Naive thymus-derived CD4-positive, alpha-beta T cell (primary cell): ENCODE measurements at regions of chr15 and their contacts with region 1.

Region 1: GRCh38 chr15:72155635-72156616 is 37.7 kb downstream of the SENP8 start:
- DNase-seq: peak; percentile 43 to 77 (median 71)
- ATAC-seq: peak; percentile 83
- H3K4me3 ChIP-seq: peak overlapping the region; percentile 46
- H3K4me3 Mint-ChIP-seq: peak overlapping the region; percentile 65 to 91 (median 80)
- H3K27ac ChIP-seq: no peak overlapping the region
- H3K27ac Mint-ChIP-seq: peak overlapping the region in 2 of 9 donors; percentile 3 to 58
- H3K4me1 ChIP-seq: peaks cover 0 to 4% of the 10 kb centered on the region in 2 donors
- H3K4me1 Mint-ChIP-seq: peaks cover 0 to 7% (median 4%) of the 10 kb centered on the region in 7 donors
- H3K27me3 ChIP-seq: no peaks in the 10 kb centered on the region
- H3K27me3 Mint-ChIP-seq: peaks cover 0 to 6% (median 0%) of the 10 kb centered on the region in 5 donors

Region 2: DNA sequence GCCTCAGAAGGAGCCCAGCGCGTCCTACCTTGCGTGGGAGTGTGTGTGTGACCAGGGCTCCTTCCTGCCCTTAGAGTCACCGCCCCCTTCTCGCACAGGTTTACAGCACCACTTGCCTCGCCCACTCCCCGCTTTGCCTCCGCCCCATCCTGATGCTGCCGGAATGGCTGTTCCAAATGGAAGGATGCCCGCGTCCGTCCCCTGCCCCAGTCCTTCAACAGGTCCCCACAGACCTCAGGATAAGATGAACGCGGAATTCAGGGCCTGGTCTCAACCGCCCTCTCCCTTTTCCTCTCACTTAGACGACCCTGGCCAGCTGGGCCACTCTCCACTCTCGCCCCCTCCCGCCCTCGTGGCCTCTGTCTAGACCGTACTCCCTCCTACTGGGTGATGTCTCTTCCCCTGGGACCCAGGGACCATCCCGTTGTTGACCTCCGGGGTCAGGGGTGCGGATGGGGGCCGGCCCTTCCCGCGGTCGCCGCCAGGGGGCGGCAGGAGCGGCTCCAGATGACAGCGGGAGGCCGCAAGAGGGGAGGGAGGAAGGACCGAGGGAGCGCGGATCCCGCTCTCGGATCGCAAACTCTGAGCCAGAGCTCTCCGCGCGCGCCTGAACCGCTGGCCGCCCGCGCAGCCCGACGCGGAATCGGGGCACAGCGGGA is 1040.9 kb before region 1 on chr15 and contains the start of gene THSD4:
- CTCF ChIA-PET with region 1: no interaction called
- POLR2A ChIA-PET with region 1: no interaction called
- intact Hi-C with region 1: loop called in 1 of 2 experiments (anchors 10 kb)
- DNase-seq: peak in 8 of 9 donors; percentile 8 to 76 (median 30)
- ATAC-seq: peak; percentile 75
- H3K4me3 ChIP-seq: no peak within 1 kb of the TSS
- H3K4me3 Mint-ChIP-seq: peak within 1 kb of the TSS; percentile 52 to 81 (median 72)
- H3K27ac ChIP-seq: no peak within 1 kb of the TSS
- H3K27ac Mint-ChIP-seq: no peak within 1 kb of the TSS
- H3K4me1 ChIP-seq: peaks cover 0 to 7% of the 10 kb centered on the region in 2 donors
- H3K4me1 Mint-ChIP-seq: peaks cover 6 to 10% (median 7%) of the 10 kb centered on the region in 7 donors
- H3K27me3 ChIP-seq: peaks cover 3% of the 10 kb centered on the region in 2 donors
- H3K27me3 Mint-ChIP-seq: peaks cover 52 to 63% (median 59%) of the 10 kb centered on the region in 5 donors
- total RNA-seq, gene THSD4: not detected

Region 3: DNA sequence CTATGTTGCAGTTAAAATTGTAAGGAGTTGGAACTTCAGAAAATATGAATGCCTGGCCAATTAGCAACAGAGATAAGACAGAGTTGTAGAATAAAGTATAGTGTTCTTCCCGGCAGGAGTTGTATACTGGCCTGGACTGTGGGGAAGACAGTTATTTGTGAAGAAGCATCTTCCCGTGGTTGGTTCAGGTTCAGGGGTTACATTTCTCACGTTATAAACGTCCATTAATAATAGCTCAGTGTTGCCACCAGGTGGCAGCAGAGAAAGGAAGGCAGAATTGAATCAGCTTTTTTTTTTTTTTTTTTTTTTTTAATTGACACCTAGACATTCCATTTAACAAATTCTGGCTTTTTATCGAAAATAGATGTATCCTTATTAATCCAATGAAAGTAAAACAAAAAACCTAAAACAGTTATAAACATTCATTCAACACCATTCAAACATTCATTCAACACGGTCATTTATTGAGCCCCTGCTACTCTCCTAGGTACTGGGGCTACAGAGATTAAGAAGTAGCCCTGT is 412.0 kb before region 1 on chr15:
- CTCF ChIA-PET with region 1: interaction called, 17 read pairs
- POLR2A ChIA-PET with region 1: no interaction called
- intact Hi-C with region 1: loop called (anchors 1 kb)
- DNase-seq: peak; percentile 1 to 58 (median 48)
- ATAC-seq: no peak
- H3K4me3 ChIP-seq: no peak overlapping the region
- H3K4me3 Mint-ChIP-seq: no peak overlapping the region
- H3K27ac ChIP-seq: no peak overlapping the region
- H3K27ac Mint-ChIP-seq: no peak overlapping the region
- H3K4me1 ChIP-seq: no peaks in the 10 kb centered on the region
- H3K4me1 Mint-ChIP-seq: peaks cover 0 to 3% (median 0%) of the 10 kb centered on the region in 7 donors
- H3K27me3 ChIP-seq: no peaks in the 10 kb centered on the region
- H3K27me3 Mint-ChIP-seq: peaks cover 0 to 27% (median 7%) of the 10 kb centered on the region in 5 donors

Region 4: DNA sequence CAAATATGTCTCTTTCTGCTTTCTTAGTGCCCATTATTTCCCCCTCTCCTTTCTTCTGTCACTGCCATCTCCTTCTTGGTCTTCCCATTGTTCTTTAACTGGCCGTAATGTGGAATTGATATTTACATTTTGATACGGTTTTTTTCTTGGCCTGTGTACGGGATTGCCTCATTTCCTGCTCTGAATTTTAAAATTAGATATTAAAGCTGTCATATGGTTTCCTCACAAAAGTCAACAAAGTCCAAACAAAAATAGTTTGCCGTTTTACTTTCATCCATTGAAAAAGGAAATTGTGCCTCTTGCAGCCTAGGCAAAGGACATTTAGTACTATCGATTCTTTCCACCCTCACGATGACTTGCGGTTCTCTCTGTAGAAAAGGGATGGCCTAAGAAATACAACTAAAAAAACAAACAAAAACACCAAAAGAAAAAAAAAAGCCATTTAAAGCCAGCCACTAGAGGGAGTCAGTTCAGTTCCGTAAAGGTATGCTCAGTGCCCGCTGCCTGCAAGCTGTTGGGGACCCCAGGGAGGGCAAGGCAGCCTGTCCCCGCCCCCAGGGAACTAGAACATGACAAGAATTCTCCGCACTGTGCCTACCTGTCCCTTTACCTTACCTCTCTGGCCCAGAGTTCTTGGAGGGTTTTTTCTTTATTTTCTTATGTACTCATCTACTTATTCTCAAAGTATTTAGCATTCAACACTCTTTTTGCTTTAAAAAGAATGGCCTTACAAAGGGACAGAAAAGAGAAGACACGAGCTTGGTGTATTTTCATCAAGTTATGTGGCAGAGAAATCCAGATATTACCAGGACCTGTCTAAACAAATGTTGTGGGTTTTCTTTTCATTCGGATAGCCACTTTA is 375.6 kb before region 1 on chr15:
- CTCF ChIA-PET with region 1: interaction called, 9 read pairs
- POLR2A ChIA-PET with region 1: no interaction called
- intact Hi-C with region 1: loop called (anchors 1 to 2 kb)
- DNase-seq: peak in 6 of 9 donors; percentile 31 to 45 (median 34)
- ATAC-seq: peak; percentile 65
- H3K4me3 ChIP-seq: no peak overlapping the region
- H3K4me3 Mint-ChIP-seq: peak overlapping the region in 1 of 10 donors; percentile 6
- H3K27ac ChIP-seq: no peak overlapping the region
- H3K27ac Mint-ChIP-seq: peak overlapping the region in 1 of 9 donors; percentile 43
- H3K4me1 ChIP-seq: no peaks in the 10 kb centered on the region
- H3K4me1 Mint-ChIP-seq: peaks cover 0 to 17% (median 0%) of the 10 kb centered on the region in 7 donors
- H3K27me3 ChIP-seq: no peaks in the 10 kb centered on the region
- H3K27me3 Mint-ChIP-seq: peaks cover 4 to 22% (median 10%) of the 10 kb centered on the region in 5 donors

Region 5: GRCh38 chr15:71800835-71801745 is 354.8 kb before region 1 on chr15:
- CTCF ChIA-PET with region 1: no interaction called
- POLR2A ChIA-PET with region 1: no interaction called
- intact Hi-C with region 1: loop called (anchors 5 kb)
- DNase-seq: peak in 4 of 9 donors; percentile 7 to 17 (median 14)
- ATAC-seq: peak; percentile 36
- H3K4me3 ChIP-seq: no peak overlapping the region
- H3K4me3 Mint-ChIP-seq: no peak overlapping the region
- H3K27ac ChIP-seq: no peak overlapping the region
- H3K27ac Mint-ChIP-seq: peak overlapping the region in 1 of 9 donors; percentile 36
- H3K4me1 ChIP-seq: no peaks in the 10 kb centered on the region
- H3K4me1 Mint-ChIP-seq: peaks cover 0 to 3% (median 0%) of the 10 kb centered on the region in 7 donors
- H3K27me3 ChIP-seq: no peaks in the 10 kb centered on the region
- H3K27me3 Mint-ChIP-seq: peaks cover 7 to 39% (median 22%) of the 10 kb centered on the region in 5 donors

Region 6: GRCh38 chr15:72732516-72732915 is 576.6 kb after region 1 on chr15:
- CTCF ChIA-PET with region 1: no interaction called
- POLR2A ChIA-PET with region 1: no interaction called
- intact Hi-C with region 1: no loop called
- DNase-seq: no peak
- ATAC-seq: no peak
- H3K4me3 ChIP-seq: no peak overlapping the region
- H3K4me3 Mint-ChIP-seq: no peak overlapping the region
- H3K27ac ChIP-seq: no peak overlapping the region
- H3K27ac Mint-ChIP-seq: peak overlapping the region in 4 of 9 donors; percentile 3 to 71 (median 38)
- H3K4me1 ChIP-seq: no peaks in the 10 kb centered on the region
- H3K4me1 Mint-ChIP-seq: peaks cover 0 to 21% (median 7%) of the 10 kb centered on the region in 7 donors
- H3K27me3 ChIP-seq: no peaks in the 10 kb centered on the region
- H3K27me3 Mint-ChIP-seq: no peaks in the 10 kb centered on the region